ENCODE measurements at regions of chr13 and their contacts with region 1.

Region 1: GRCh38 chr13:40777166-40777808 is 6.3 kb upstream of the MRPS31 start:
- DNase-seq: peak; percentile 36
- H3K4me3 Mint-ChIP-seq: peak overlapping the region; percentile 15
- H3K27ac Mint-ChIP-seq: peak overlapping the region; percentile 21
- H3K4me1 Mint-ChIP-seq: peaks cover 17% of the 10 kb centered on the region
- H3K27me3 Mint-ChIP-seq: no peaks in the 10 kb centered on the region
- CTCF ChIP-seq: peak; percentile 45

Region 2: GRCh38 chr13:39684531-39685137 is 1092.7 kb before region 1 on chr13:
- CTCF ChIA-PET with region 1: no interaction called
- intact Hi-C with region 1: loop called (anchors 2 kb)
- DNase-seq: no peak
- H3K4me3 Mint-ChIP-seq: no peak overlapping the region
- H3K27ac Mint-ChIP-seq: no peak overlapping the region
- H3K4me1 Mint-ChIP-seq: no peaks in the 10 kb centered on the region
- H3K27me3 Mint-ChIP-seq: no peaks in the 10 kb centered on the region
- CTCF ChIP-seq: no peak

Region 3: DNA sequence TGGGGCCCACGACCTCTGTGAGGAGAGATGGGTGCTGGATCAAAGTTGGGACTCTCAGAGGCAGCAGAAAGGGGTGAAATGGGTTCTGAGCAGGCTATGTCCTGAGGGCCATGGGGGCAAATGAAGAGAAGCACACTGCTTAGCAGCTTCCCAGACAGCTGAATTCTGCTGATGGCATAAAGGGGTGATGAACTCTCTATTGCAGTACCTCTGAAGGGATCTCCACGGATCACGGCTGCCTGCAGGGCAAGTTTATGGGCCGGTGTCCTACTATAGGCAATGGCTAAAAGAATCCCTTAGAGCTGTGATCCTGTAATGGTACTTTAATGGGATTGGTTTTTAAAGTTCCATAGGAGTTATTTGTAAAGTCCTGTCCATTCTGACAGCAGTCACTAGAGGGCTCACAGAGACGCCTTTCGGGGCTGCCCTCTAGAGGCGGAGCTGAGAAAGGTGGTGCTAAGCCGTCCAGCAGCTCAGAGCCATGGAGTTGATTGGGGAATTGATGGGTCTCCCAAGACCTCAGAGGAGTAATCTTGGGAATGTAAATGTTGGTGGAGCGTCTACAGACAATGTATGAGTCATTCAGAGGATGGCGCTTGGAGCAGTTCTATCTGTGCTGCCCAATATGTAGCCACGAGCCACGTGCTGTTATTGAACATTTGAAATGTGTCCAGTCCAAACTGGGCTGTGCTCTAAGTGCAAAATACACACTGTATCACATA is 834.6 kb before region 1 on chr13:
- CTCF ChIA-PET with region 1: no interaction called
- intact Hi-C with region 1: loop called (anchors 2 kb)
- DNase-seq: peak; percentile 70
- H3K4me3 Mint-ChIP-seq: no peak overlapping the region
- H3K27ac Mint-ChIP-seq: no peak overlapping the region
- H3K4me1 Mint-ChIP-seq: peaks cover 7% of the 10 kb centered on the region
- H3K27me3 Mint-ChIP-seq: no peaks in the 10 kb centered on the region
- CTCF ChIP-seq: peak; percentile 86

Region 4: DNA sequence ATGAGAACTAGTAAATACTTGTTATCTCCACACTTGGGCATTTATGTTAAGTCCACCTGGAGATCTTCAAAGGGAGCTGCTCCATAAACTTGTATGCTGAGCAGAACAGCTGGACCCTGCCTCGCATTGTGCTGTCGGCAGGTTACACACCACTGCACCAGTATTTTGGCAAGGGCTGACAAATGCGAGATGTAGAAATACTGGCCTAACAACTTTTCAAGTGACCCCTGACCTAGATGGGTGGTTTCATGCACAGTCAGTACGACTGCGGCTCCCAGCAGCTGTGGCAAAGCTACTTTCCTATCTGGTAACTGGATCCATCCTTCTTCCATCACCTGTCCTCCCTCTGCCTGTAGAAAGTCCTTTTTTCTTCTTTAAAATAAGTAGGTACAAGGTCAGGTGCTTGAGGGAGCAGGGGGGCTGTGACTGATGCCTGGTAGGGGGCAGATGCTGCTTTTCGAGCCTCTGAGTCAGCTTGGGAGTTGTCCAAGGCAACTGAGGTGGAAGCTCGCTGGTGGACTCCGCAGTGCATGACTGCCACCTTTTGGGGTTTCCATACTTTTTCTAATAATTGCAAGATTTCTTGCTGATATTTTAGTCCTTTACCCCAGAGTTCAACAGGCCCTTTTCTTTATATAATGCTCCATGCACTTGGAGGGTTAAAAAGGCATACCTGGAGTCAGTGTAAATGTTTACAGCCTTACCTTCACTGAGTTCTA is 98.9 kb after region 1 on chr13:
- CTCF ChIA-PET with region 1: no interaction called
- intact Hi-C with region 1: no loop called
- DNase-seq: no peak
- H3K4me3 Mint-ChIP-seq: no peak overlapping the region
- H3K27ac Mint-ChIP-seq: no peak overlapping the region
- H3K4me1 Mint-ChIP-seq: no peaks in the 10 kb centered on the region
- H3K27me3 Mint-ChIP-seq: no peaks in the 10 kb centered on the region
- CTCF ChIP-seq: no peak

Region 5: DNA sequence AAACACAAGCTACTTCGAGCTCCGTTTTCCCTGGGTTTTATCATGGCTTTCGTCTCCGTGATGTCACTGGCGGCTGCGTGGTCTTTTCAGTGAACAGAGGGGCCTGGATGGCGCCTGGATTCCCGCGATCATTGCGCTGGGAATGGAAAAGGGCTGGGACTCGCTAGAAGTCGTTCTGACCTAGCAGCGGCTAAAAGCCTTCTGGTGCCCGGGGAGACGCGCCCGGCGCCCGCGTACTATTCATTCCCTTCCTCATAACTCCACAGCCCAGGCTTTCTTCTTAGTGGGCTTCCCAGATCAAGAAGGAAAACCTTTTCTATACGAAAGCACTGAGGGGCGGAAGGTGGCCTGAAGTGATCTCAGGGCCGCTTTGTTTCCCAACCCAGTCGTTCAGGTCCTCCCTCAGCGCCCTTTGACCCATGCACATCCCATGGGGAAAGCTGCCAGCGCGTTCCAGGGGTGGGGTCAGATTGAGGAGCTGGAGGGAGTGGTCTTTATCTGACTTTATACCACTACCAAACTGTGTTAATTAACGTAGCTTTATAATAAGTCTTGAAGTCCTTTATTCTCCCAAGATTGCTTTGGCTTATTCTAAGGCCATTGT is 145.3 kb after region 1 on chr13:
- CTCF ChIA-PET with region 1: interaction called, 3 read pairs
- intact Hi-C with region 1: loop called (anchors 1 kb)
- DNase-seq: no peak
- H3K4me3 Mint-ChIP-seq: peak overlapping the region; percentile 85
- H3K27ac Mint-ChIP-seq: no peak overlapping the region
- H3K4me1 Mint-ChIP-seq: peaks cover 10% of the 10 kb centered on the region
- H3K27me3 Mint-ChIP-seq: no peaks in the 10 kb centered on the region
- CTCF ChIP-seq: no peak